ENCODE measurements at regions of chr7 and their contacts with region 1.

Region 1: DNA sequence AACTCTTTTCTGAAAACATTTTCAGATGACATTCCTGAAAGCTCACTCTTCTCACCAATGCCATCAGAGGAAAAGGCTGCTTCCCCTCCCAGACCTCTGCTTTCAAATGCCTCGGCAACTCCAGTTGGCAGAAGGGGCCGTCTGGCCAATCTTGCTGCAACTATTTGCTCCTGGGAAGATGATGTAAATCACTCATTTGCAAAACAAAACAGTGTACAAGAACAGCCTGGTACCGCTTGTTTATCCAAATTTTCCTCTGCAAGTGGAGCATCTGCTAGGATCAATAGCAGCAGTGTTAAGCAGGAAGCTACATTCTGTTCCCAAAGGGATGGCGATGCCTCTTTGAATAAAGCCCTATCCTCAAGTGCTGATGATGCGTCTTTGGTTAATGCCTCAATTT is 16.5 kb downstream of the ANLN start:
- DNase-seq: no peak
- H3K4me3 Mint-ChIP-seq: no peak overlapping the region
- H3K27ac Mint-ChIP-seq: no peak overlapping the region
- H3K4me1 Mint-ChIP-seq: peaks cover 32% of the 10 kb centered on the region
- H3K27me3 Mint-ChIP-seq: no peaks in the 10 kb centered on the region
- CTCF ChIP-seq: no peak

Region 2: DNA sequence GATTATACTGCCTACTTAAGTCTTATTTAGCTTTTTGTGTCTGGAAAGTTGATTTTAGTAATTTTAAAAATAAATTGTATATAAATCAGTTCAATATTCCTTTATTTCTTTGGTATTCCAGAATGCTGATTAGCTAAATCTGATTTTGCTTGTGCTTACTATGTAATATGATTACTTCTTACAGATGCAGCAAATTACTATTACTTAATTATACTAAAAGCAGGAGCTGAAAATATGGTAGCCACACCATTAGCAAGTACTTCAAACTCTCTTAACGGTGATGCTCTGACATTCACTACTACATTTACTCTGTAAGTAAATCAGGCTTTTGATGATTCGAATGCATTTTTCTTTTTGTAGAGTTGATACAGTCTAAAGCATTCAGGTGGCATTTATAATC is 17.5 kb after region 1 on chr7:
- CTCF ChIA-PET with region 1: interaction called, 5 read pairs
- POLR2A ChIA-PET with region 1: interaction called, 10 read pairs
- intact Hi-C with region 1: no loop called
- DNase-seq: no peak
- H3K4me3 Mint-ChIP-seq: no peak overlapping the region
- H3K27ac Mint-ChIP-seq: peak overlapping the region; percentile 75
- H3K4me1 Mint-ChIP-seq: peaks cover 6% of the 10 kb centered on the region
- H3K27me3 Mint-ChIP-seq: no peaks in the 10 kb centered on the region
- CTCF ChIP-seq: no peak

Region 3: GRCh38 chr7:36615852-36616540 is 209.8 kb after region 1 on chr7:
- CTCF ChIA-PET with region 1: no interaction called
- POLR2A ChIA-PET with region 1: no interaction called
- intact Hi-C with region 1: no loop called
- DNase-seq: no peak
- H3K4me3 Mint-ChIP-seq: no peak overlapping the region
- H3K27ac Mint-ChIP-seq: no peak overlapping the region
- H3K4me1 Mint-ChIP-seq: no peaks in the 10 kb centered on the region
- H3K27me3 Mint-ChIP-seq: no peaks in the 10 kb centered on the region
- CTCF ChIP-seq: no peak

Region 4: GRCh38 chr7:37054624-37055241 is 648.6 kb after region 1 on chr7:
- CTCF ChIA-PET with region 1: no interaction called
- POLR2A ChIA-PET with region 1: no interaction called
- intact Hi-C with region 1: no loop called
- DNase-seq: peak; percentile 4
- H3K4me3 Mint-ChIP-seq: no peak overlapping the region
- H3K27ac Mint-ChIP-seq: no peak overlapping the region
- H3K4me1 Mint-ChIP-seq: no peaks in the 10 kb centered on the region
- H3K27me3 Mint-ChIP-seq: peaks cover 26% of the 10 kb centered on the region
- CTCF ChIP-seq: no peak

Measured in MCF 10A (cell line).